ENCODE measurements at regions of chr3 and their contacts with region 1.

Region 1: GRCh38 chr3:194344012-194344411 is 7.1 kb downstream of the CPN2 start:
- DNase-seq: peak; percentile 84
- CTCF ChIP-seq: peak; percentile 88

Region 2: GRCh38 chr3:193780810-193781472 is 563.1 kb before region 1 on chr3:
- CTCF ChIA-PET with region 1: interaction called, 19 read pairs
- POLR2A ChIA-PET with region 1: no interaction called
- DNase-seq: peak; percentile 67
- CTCF ChIP-seq: peak; percentile 44

Region 3: GRCh38 chr3:194323785-194324735 is 20.0 kb before region 1 on chr3:
- CTCF ChIA-PET with region 1: interaction called, 12 read pairs
- POLR2A ChIA-PET with region 1: no interaction called
- DNase-seq: peak; percentile 58
- CTCF ChIP-seq: no peak

Region 4: GRCh38 chr3:194333212-194333980 is 10.6 kb before region 1 on chr3:
- CTCF ChIA-PET with region 1: interaction called, 96 read pairs
- POLR2A ChIA-PET with region 1: no interaction called
- DNase-seq: peak; percentile 87
- CTCF ChIP-seq: peak; percentile 99

Region 5: DNA sequence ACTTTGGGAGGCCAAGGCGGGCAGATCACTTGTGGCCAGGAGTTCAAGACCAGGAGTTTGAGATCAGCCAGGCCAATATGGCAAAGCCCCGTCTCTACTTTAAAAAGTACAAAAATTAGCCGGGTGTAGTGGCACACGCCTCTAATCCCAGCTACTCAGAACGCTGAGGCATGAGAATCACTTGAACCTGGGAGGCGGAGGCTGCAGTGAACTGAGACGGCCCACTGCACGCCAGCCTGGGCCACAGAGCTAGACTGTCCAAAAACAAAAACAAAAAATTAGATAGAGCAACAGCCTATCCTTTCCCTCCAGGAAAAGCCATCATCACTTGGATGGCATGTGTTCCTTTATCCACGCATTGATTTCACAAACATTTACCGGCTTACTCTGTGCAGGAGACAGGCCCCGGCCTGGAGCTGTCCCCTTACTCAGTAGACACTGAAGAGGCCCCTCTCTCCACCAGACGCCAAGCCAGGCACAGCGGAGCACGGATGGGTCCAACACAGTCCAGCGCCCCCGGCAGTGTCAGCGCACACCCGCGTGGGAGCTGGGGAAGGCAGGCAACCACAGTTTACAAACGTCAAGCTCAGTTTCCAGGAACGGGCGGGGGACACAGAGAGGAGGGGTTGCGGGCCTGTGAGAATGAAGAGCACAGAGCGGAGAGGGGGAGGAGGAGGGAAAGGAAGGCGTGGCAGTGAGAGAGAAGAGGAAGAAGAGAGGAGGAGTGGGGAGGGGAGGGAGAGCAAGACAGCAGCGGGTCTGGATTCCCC is 52.0 kb after region 1 on chr3:
- CTCF ChIA-PET with region 1: interaction called, 12 read pairs
- POLR2A ChIA-PET with region 1: no interaction called
- DNase-seq: no peak
- CTCF ChIP-seq: no peak